MCF 10A (cell line): ENCODE measurements at regions of chr1 and their contacts with region 1.

Region 1: DNA sequence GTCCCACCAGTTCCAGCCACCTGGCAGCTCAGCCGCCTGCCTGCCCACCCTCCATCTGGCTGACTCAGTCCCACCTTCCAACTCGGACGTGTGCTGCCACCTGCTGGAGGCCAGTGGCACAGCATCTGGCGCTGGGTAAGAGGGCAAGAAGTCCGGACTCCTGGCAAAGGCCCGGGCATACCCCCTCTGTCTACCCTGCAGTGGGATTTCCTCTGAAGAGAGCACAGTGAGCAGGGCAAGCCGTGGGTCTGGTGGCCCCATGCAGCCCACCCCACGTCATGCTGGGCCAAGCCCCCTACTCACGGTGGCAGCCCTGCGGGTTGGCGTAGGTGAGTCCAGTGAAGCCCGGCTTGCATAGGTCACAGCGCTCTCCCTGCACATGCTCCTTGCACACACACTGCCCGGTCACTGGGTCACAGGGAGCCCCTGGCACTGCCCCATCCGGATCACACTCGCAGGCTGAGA is 24.5 kb downstream of the LAMB3 start:
- DNase-seq: peak; percentile 84
- H3K4me3 Mint-ChIP-seq: no peak overlapping the region
- H3K27ac Mint-ChIP-seq: peak overlapping the region; percentile 11
- H3K4me1 Mint-ChIP-seq: peaks cover 40% of the 10 kb centered on the region
- H3K27me3 Mint-ChIP-seq: no peaks in the 10 kb centered on the region
- CTCF ChIP-seq: peak; percentile 99

Region 2: GRCh38 chr1:209363112-209363511 is 264.7 kb before region 1 on chr1:
- CTCF ChIA-PET with region 1: interaction called, 10 read pairs
- POLR2A ChIA-PET with region 1: no interaction called
- intact Hi-C with region 1: no loop called
- DNase-seq: no peak
- H3K4me3 Mint-ChIP-seq: no peak overlapping the region
- H3K27ac Mint-ChIP-seq: peak overlapping the region; percentile 88
- H3K4me1 Mint-ChIP-seq: peaks cover 60% of the 10 kb centered on the region
- H3K27me3 Mint-ChIP-seq: no peaks in the 10 kb centered on the region
- CTCF ChIP-seq: no peak

Region 3: GRCh38 chr1:209607102-209607794 is 20.5 kb before region 1 on chr1:
- CTCF ChIA-PET with region 1: interaction called, 140 read pairs
- POLR2A ChIA-PET with region 1: interaction called, 24 read pairs
- intact Hi-C with region 1: loop called (anchors 1 kb)
- DNase-seq: peak; percentile 92
- H3K4me3 Mint-ChIP-seq: no peak overlapping the region
- H3K27ac Mint-ChIP-seq: peak overlapping the region; percentile 81
- H3K4me1 Mint-ChIP-seq: no peaks in the 10 kb centered on the region
- H3K27me3 Mint-ChIP-seq: no peaks in the 10 kb centered on the region
- CTCF ChIP-seq: no peak

Region 4: GRCh38 chr1:209643285-209644020 is 15.7 kb after region 1 on chr1:
- CTCF ChIA-PET with region 1: interaction called, 48 read pairs
- POLR2A ChIA-PET with region 1: interaction called, 29 read pairs
- intact Hi-C with region 1: no loop called
- DNase-seq: peak; percentile 61
- H3K4me3 Mint-ChIP-seq: peak overlapping the region; percentile 24
- H3K27ac Mint-ChIP-seq: peak overlapping the region; percentile 68
- H3K4me1 Mint-ChIP-seq: peaks cover 69% of the 10 kb centered on the region
- H3K27me3 Mint-ChIP-seq: no peaks in the 10 kb centered on the region
- CTCF ChIP-seq: no peak